MCF 10A (cell line): ENCODE measurements at regions of chr20 and their contacts with region 1.

Region 1: GRCh38 chr20:37501940-37502339 is 19.1 kb upstream of the NNAT start:
- DNase-seq: no peak
- H3K4me3 Mint-ChIP-seq: no peak overlapping the region
- H3K27ac Mint-ChIP-seq: no peak overlapping the region
- H3K4me1 Mint-ChIP-seq: no peaks in the 10 kb centered on the region
- H3K27me3 Mint-ChIP-seq: no peaks in the 10 kb centered on the region
- CTCF ChIP-seq: no peak

Region 2: GRCh38 chr20:37490663-37491350 is 11.1 kb before region 1 on chr20:
- CTCF ChIA-PET with region 1: interaction called, 5 read pairs
- POLR2A ChIA-PET with region 1: interaction called, 13 read pairs
- intact Hi-C with region 1: no loop called
- DNase-seq: no peak
- H3K4me3 Mint-ChIP-seq: no peak overlapping the region
- H3K27ac Mint-ChIP-seq: no peak overlapping the region
- H3K4me1 Mint-ChIP-seq: no peaks in the 10 kb centered on the region
- H3K27me3 Mint-ChIP-seq: no peaks in the 10 kb centered on the region
- CTCF ChIP-seq: no peak